ENCODE measurements at regions of chr17 and their contacts with region 1.

Region 1: DNA sequence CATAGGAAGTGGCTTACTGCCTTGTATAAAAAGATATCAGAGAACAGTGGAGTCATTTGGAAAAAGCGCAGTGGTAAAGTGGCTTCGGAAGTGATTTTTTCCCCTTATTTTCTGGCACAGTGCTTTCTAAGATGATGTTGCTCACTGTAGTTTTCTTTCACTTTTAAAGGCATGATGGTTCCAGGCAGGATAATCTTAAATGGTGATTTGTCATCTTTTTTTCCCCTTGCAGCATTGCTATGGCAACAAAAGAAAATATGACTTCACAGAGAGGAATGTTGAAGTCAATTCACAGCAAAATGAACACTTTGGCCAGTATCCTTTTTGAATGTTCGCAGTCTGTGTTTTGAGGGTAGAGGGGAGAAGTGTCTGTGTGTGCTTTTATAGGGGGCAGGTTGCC is 42.5 kb downstream of the GOSR1 start:
- DNase-seq: no peak
- ATAC-seq: peak; percentile 56 to 71
- H3K4me3 ChIP-seq: no peak overlapping the region
- H3K27ac ChIP-seq: no peak overlapping the region
- H3K4me1 ChIP-seq: no peaks in the 10 kb centered on the region
- H3K27me3 ChIP-seq: no peaks in the 10 kb centered on the region

Region 2: GRCh38 chr17:29561554-29562517 is 957.9 kb before region 1 on chr17:
- intact Hi-C with region 1: no loop called
- DNase-seq: peak in 2 of 3 donors; percentile 69 to 74
- ATAC-seq: no peak
- H3K4me3 ChIP-seq: no peak overlapping the region
- H3K27ac ChIP-seq: no peak overlapping the region
- H3K4me1 ChIP-seq: peaks cover 5% of the 10 kb centered on the region
- H3K27me3 ChIP-seq: no peaks in the 10 kb centered on the region

Region 3: DNA sequence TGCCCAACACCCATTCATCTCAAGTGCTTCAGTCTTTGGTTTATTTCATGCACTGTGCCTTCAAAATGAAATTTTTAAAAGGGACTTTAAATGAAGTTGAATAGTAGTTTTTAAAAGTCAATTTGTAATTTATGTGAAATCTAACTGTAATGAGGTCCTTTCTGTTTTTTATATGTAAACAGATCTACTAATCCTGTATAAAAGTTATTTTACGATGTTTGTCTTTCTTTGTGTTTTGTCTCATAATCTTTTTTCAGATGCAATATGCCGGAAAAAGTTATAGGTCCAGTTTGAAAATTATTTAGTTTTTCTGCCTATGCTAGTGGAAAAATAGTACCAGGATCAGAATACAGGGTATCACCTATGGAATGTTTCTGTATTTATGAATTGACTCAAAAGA is 51.2 kb before region 1 on chr17:
- intact Hi-C with region 1: loop called in 1 of 4 experiments (anchors 10 kb)
- DNase-seq: no peak
- ATAC-seq: no peak
- H3K4me3 ChIP-seq: no peak overlapping the region
- H3K27ac ChIP-seq: no peak overlapping the region
- H3K4me1 ChIP-seq: no peaks in the 10 kb centered on the region
- H3K27me3 ChIP-seq: no peaks in the 10 kb centered on the region

Measured in right cardiac atrium (tissue), 5 donors.